ENCODE measurements at regions of chr1 and their contacts with region 1.

Region 1: GRCh38 chr1:26602378-26602959 is 72.9 kb downstream of the RPS6KA1 start:
- DNase-seq: peak; percentile 55
- H3K4me3 Mint-ChIP-seq: no peak overlapping the region
- H3K27ac Mint-ChIP-seq: no peak overlapping the region
- H3K4me1 Mint-ChIP-seq: peaks cover 15% of the 10 kb centered on the region
- H3K27me3 Mint-ChIP-seq: peaks cover 37% of the 10 kb centered on the region

Region 2: DNA sequence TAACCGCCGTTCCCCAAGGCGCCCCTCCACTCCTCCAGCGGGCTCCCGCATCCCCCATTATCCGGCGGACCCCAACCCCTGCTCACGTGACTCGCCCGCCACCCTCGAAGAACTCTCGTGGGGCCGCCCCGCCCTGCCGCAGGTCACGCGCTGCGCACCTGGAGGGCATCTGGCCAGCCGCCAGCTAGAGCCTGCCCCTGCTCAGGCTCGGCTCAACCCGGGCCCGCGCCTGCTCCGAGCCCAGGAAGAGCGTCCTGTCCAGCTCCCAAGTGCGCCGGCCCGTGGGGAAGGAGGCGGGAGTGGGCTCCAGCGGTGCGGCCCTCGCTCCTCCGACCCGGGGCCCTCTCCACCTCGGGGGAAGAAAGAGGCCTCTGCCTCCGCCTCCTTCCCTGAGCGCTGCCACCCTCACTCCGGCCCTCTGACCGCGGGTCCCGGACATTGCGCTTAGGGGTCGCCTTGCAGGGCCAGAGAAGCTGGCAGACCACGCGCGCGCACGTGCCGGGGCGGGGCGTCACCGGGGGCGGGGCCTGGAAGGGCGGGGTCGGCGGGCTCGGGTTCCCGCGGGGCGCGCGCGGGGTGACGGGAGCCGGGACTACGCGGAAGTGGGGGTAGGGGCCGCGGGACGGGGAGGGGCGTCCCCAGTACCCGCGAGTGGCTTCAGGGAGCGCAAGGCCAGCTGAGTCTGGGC is 101.8 kb before region 1 on chr1:
- CTCF ChIA-PET with region 1: interaction called, 11 read pairs
- DNase-seq: peak; percentile 91
- H3K4me3 Mint-ChIP-seq: peak overlapping the region; percentile 83
- H3K27ac Mint-ChIP-seq: peak overlapping the region; percentile 95
- H3K4me1 Mint-ChIP-seq: peaks cover 37% of the 10 kb centered on the region
- H3K27me3 Mint-ChIP-seq: no peaks in the 10 kb centered on the region

Region 3: GRCh38 chr1:26692793-26693490 is 90.5 kb after region 1 on chr1:
- CTCF ChIA-PET with region 1: interaction called, 11 read pairs
- DNase-seq: peak; percentile 96
- H3K4me3 Mint-ChIP-seq: peak overlapping the region; percentile 87
- H3K27ac Mint-ChIP-seq: peak overlapping the region; percentile 97
- H3K4me1 Mint-ChIP-seq: peaks cover 29% of the 10 kb centered on the region
- H3K27me3 Mint-ChIP-seq: peaks cover 4% of the 10 kb centered on the region

Region 4: GRCh38 chr1:26754086-26754874 is 151.8 kb after region 1 on chr1:
- CTCF ChIA-PET with region 1: no interaction called
- DNase-seq: no peak
- H3K4me3 Mint-ChIP-seq: no peak overlapping the region
- H3K27ac Mint-ChIP-seq: no peak overlapping the region
- H3K4me1 Mint-ChIP-seq: peaks cover 33% of the 10 kb centered on the region
- H3K27me3 Mint-ChIP-seq: no peaks in the 10 kb centered on the region

Region 5: DNA sequence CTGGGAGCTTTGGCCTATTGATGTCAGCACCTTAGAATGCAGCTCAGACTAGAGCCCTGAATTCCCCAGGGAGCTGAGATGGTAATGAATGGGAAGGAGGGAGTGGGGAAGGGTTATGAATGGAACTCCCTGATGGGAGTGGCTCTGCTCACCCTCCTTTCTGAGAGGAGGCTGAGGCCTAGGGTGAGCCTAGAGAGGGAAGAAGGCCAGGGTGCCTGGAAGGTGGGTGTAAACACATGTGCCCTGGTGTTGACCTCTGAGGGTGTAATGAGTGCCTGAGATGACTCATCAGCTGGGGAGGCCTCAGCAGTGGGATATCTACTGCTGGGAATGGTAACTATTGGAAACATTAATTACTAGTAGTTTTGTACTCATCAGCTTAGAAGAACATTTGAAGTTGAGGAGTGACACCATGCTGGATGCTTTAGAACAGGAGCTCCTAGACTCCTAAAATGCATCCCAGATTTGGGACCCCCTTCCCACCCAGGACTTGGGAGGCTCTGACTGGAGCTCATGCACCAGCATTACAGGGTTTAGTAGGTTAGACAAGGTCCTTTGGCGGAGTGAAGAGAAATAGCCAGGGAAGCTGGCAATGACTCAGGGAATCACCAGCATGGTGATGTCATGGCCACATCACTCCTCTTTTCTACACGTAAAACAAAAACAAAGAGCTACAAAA is 169.3 kb after region 1 on chr1:
- CTCF ChIA-PET with region 1: no interaction called
- DNase-seq: no peak
- H3K4me3 Mint-ChIP-seq: no peak overlapping the region
- H3K27ac Mint-ChIP-seq: peak overlapping the region; percentile 64
- H3K4me1 Mint-ChIP-seq: peaks cover 9% of the 10 kb centered on the region
- H3K27me3 Mint-ChIP-seq: no peaks in the 10 kb centered on the region

Region 6: GRCh38 chr1:26811057-26811456 is 208.6 kb after region 1 on chr1:
- CTCF ChIA-PET with region 1: interaction called, 13 read pairs
- DNase-seq: no peak
- H3K4me3 Mint-ChIP-seq: no peak overlapping the region
- H3K27ac Mint-ChIP-seq: no peak overlapping the region
- H3K4me1 Mint-ChIP-seq: peaks cover 26% of the 10 kb centered on the region
- H3K27me3 Mint-ChIP-seq: no peaks in the 10 kb centered on the region

Region 7: GRCh38 chr1:26887125-26887524 is 284.7 kb after region 1 on chr1:
- CTCF ChIA-PET with region 1: interaction called, 19 read pairs
- DNase-seq: peak; percentile 41
- H3K4me3 Mint-ChIP-seq: peak overlapping the region; percentile 13
- H3K27ac Mint-ChIP-seq: peak overlapping the region; percentile 16
- H3K4me1 Mint-ChIP-seq: peaks cover 32% of the 10 kb centered on the region
- H3K27me3 Mint-ChIP-seq: no peaks in the 10 kb centered on the region

Region 8: GRCh38 chr1:27318136-27318535 is 715.7 kb after region 1 on chr1:
- CTCF ChIA-PET with region 1: no interaction called
- DNase-seq: no peak
- H3K4me3 Mint-ChIP-seq: no peak overlapping the region
- H3K27ac Mint-ChIP-seq: no peak overlapping the region
- H3K4me1 Mint-ChIP-seq: peaks cover 15% of the 10 kb centered on the region
- H3K27me3 Mint-ChIP-seq: peaks cover 24% of the 10 kb centered on the region

Measured in activated naive CD4-positive, alpha-beta T cell treated with anti-CD3 and anti-CD28 coated beads, Interleukin-2, amount 10 ng/mL, durations not matched to agents 7 days and 5 days (primary cell).